ENCODE measurements at regions of chrX and their contacts with region 1.

Region 1: DNA sequence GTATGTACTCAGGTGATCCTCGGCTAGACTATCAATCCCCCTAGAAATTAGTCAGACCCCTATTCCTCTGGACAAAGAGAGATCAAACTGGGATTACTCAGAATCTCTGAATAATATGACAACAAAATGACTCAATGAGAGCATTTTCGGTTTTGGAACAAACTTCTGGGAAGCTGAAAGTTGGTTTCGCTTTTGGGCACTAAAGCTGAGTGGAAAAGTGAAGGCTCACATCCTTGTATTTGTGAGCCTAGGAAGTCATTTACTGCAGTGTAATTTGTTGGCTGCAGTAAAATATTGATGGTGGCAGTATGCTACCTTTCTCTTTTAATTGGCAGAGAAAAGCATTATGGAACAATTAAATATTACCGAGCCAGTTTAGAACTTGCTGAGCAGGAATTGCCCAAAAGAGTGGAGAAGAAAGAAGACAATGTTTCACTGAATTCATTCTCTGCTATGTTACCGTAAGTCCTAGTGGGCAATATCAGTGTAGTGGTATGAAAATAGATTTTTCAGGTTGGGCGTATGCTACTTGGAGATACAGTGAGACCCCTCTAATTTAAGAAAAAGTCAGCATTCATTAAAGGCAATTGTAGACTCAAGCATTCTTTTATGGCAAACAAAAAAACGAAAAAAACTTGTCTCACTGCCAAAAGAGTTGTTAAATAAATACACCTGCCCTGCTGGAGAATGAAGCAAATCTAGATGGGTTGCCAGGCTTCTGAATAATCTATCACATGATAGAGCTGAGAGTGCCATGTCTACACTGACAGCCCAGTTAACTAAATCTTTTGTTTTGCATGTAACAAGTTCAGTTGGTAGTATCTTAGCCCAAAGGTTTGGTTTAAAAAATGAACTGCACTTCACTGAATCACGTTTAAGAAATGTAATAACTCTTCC is 69.6 kb downstream of the AGTR2 start:
- DNase-seq: peak; percentile 87
- ATAC-seq: peak; percentile 77
- H3K4me3 ChIP-seq: peak overlapping the region; percentile 66
- H3K27ac ChIP-seq: peak overlapping the region; percentile 98
- H3K4me1 ChIP-seq: peaks cover 40% of the 10 kb centered on the region
- H3K27me3 ChIP-seq: no peaks in the 10 kb centered on the region
- CTCF ChIP-seq: no peak

Region 2: DNA sequence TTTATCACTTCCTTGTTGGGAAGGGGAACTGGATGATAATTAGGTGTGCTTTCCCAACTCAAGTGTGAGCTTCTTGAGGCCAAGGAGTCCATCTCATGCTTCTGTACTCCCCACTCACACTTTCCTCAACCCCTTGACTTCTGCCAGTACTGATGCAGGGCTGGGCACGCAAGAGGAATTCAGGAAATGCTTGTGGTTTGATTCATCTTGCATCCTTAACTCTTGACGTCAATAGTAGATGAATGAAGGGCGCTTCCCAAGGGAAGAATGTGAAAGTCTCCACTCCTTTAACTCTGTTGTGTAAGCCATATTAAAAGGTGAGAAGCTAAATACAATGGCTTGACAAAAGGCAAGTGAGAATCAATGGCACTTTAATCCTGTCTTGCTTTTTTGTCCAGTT is 32.1 kb after region 1 on chrX:
- CTCF ChIA-PET with region 1: no interaction called
- POLR2A ChIA-PET with region 1: no interaction called
- intact Hi-C with region 1: loop called (anchors 2 kb)
- DNase-seq: peak; percentile 90
- ATAC-seq: peak; percentile 94
- H3K4me3 ChIP-seq: no peak overlapping the region
- H3K27ac ChIP-seq: peak overlapping the region; percentile 100
- H3K4me1 ChIP-seq: peaks cover 18% of the 10 kb centered on the region
- H3K27me3 ChIP-seq: no peaks in the 10 kb centered on the region
- CTCF ChIP-seq: no peak

Region 3: DNA sequence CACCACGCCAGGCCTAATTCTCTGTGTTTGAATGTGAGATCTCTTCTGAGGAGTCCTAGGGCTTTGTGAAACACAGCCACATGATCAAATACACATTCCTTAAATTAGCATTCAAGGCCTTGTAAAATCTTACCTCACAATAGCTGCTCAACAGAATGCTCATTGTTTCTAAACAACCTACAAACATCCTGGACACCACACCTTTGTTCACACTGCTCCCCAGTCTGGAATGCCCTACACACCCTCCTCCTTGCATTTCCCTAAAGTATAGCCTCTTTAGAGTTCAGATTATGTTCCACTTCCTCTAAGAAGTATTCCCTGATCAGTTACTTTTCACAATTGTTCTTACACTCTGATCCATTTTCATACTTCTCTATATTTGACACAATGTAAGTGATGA is 40.9 kb after region 1 on chrX:
- CTCF ChIA-PET with region 1: no interaction called
- POLR2A ChIA-PET with region 1: no interaction called
- intact Hi-C with region 1: loop called (anchors 2 kb)
- DNase-seq: peak; percentile 43
- ATAC-seq: peak; percentile 68
- H3K4me3 ChIP-seq: no peak overlapping the region
- H3K27ac ChIP-seq: peak overlapping the region; percentile 72
- H3K4me1 ChIP-seq: peaks cover 29% of the 10 kb centered on the region
- H3K27me3 ChIP-seq: no peaks in the 10 kb centered on the region
- CTCF ChIP-seq: no peak

Region 4: GRCh38 chrX:116342903-116343302 is 102.7 kb after region 1 on chrX:
- CTCF ChIA-PET with region 1: no interaction called
- POLR2A ChIA-PET with region 1: no interaction called
- intact Hi-C with region 1: no loop called
- DNase-seq: no peak
- ATAC-seq: no peak
- H3K4me3 ChIP-seq: no peak overlapping the region
- H3K27ac ChIP-seq: no peak overlapping the region
- H3K4me1 ChIP-seq: no peaks in the 10 kb centered on the region
- H3K27me3 ChIP-seq: no peaks in the 10 kb centered on the region
- CTCF ChIP-seq: no peak

Region 5: GRCh38 chrX:116449169-116449568 is 209.0 kb after region 1 on chrX:
- CTCF ChIA-PET with region 1: no interaction called
- POLR2A ChIA-PET with region 1: no interaction called
- intact Hi-C with region 1: loop called (anchors 10 kb)
- DNase-seq: peak; percentile 44
- ATAC-seq: no peak
- H3K4me3 ChIP-seq: no peak overlapping the region
- H3K27ac ChIP-seq: no peak overlapping the region
- H3K4me1 ChIP-seq: no peaks in the 10 kb centered on the region
- H3K27me3 ChIP-seq: no peaks in the 10 kb centered on the region
- CTCF ChIP-seq: no peak

Region 6: DNA sequence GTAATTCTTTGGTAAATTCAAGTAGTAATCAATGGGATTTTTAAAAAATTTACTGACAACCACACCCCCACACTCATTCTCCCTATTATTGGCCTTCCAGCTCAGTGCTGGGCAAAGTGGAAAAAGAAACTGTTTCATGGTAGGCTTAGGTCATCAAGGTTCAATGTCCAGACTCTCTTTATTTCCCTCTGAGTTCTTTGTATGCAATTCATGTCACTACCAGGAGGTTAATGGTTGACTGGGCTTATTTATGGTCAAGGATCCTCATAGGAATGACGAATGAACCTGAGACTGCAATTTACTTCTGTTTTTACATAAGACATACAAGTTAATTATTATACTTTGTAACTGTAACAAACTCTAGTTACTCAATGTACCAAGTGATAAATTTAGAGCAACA is 1473.2 kb after region 1 on chrX:
- CTCF ChIA-PET with region 1: no interaction called
- POLR2A ChIA-PET with region 1: no interaction called
- intact Hi-C with region 1: no loop called
- DNase-seq: no peak
- ATAC-seq: no peak
- H3K4me3 ChIP-seq: no peak overlapping the region
- H3K27ac ChIP-seq: no peak overlapping the region
- H3K4me1 ChIP-seq: no peaks in the 10 kb centered on the region
- H3K27me3 ChIP-seq: no peaks in the 10 kb centered on the region
- CTCF ChIP-seq: no peak